ENCODE measurements at regions of chr14 and their contacts with region 1.

Region 1: DNA sequence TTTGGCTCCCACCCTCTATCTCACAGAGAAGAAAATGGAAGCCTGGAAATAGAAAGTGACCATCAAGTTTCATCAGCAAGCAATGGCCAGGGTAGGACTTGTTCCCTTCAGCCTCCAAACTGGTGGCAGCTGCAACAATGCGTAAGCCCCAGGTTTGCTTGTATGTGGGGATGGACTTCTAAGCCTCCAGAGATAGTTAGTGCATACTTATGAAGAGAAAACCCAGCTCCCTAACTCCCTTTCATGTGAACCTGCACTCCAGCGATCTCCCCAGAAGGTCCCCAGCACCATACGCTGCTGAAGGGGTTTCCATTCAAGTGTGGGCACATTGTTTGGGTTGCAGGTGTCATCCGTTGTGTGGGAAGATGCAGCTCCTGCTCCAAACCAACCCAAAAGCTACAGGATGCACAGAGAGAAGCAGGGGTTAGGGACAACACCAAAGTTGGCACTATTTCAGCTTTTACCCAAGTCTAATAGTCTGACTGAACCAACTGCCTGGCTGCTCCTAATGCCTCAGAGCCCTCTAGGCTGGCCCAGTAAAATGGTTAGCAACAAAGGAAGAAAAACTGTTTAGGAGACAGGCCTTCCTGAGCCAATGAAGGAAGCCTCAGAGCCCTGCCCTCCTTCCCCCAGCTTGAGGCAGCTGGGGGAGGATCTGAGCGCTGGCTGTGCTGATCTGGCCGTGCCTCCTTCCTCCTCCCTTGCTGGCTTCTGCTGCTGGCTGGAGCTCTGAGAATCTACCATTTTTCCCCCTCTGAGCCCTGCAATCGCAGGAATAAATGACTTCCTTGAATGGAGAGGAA is 12.3 kb downstream of the ZFP36L1 start:
- DNase-seq: peak in 4 of 5 donors; percentile 27 to 64 (median 38)
- H3K4me3 ChIP-seq: peak overlapping the region in 1 of 2 donors; percentile 49
- H3K4me3 Mint-ChIP-seq: peak overlapping the region; percentile 79 to 93 (median 85)
- H3K27ac ChIP-seq: peak overlapping the region; percentile 58
- H3K27ac Mint-ChIP-seq: peak overlapping the region; percentile 93 to 99 (median 97)
- H3K4me1 ChIP-seq: peaks cover 91% of the 10 kb centered on the region
- H3K4me1 Mint-ChIP-seq: peaks cover 60 to 98% (median 76%) of the 10 kb centered on the region in 4 donors
- H3K27me3 ChIP-seq: no peaks in the 10 kb centered on the region
- H3K27me3 Mint-ChIP-seq: no peaks in the 10 kb centered on the region

Region 2: DNA sequence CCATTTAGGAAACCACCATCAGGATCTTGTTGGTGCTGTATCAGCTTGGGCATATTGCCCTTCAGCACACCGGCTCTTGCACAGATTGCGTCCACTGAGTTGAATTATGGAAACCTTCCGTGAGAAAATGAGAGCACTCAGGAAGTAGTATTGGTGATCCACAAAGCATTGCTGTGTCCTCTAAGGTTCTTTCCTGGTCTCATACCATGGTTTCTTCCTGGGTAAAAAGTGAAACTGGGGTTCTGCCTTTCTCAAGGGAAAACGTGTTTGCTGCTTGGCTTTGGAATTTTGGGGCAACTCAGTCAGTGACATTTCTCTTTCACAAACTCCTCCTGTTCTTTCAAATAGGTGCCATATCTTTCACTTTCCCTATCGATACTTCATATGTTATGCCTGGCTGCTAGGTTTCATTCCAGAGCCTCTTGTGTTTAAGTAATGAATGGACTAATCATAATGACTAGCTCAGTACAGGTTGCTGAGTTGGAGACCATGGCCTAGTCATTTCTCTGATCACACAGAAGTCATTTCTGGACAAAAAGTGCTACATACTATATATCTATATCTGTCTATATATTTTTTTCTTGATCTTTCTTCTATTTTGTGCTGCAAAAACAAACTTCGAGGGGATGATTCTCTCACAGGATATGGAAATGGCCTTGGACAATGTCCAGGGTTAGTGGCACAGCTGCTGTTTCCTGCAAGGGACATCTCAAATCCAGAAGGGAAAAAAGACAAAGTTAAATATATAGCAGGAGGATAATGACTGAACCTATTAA is 411.1 kb before region 1 on chr14:
- CTCF ChIA-PET with region 1: no interaction called
- POLR2A ChIA-PET with region 1: interaction called, 17 read pairs
- intact Hi-C with region 1: no loop called
- DNase-seq: peak in 1 of 5 donors; percentile 7
- H3K4me3 ChIP-seq: peak overlapping the region in 1 of 2 donors; percentile 9
- H3K4me3 Mint-ChIP-seq: peak overlapping the region; percentile 43 to 83 (median 70)
- H3K27ac ChIP-seq: peak overlapping the region; percentile 45
- H3K27ac Mint-ChIP-seq: peak overlapping the region; percentile 71 to 95 (median 86)
- H3K4me1 ChIP-seq: peaks cover 40% of the 10 kb centered on the region
- H3K4me1 Mint-ChIP-seq: peaks cover 26 to 61% (median 47%) of the 10 kb centered on the region in 4 donors
- H3K27me3 ChIP-seq: no peaks in the 10 kb centered on the region
- H3K27me3 Mint-ChIP-seq: no peaks in the 10 kb centered on the region

Region 3: DNA sequence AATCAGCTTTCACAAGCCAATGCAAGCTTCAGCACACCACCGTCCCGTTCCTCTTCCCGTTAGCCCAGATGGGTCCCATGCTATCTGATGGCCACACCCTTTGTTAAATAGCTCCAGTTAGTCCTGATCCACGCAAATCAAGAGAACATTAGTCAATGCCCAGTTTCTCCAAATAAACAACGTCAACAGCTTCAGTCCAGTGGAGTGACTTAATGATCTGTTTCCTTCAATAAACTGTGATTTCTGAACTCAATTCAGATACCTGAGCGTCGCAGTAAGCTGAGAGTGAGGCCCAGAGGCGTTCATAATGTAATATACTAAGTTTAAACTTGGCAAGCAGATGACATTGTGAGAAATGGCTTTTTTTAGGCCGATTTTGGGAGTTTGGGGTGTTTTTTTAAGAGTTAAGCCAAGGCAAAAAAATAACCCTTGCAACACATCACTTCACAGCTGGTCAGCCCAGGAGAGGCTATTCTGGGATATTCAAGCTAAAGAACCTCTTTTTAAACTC is 100.0 kb before region 1 on chr14:
- CTCF ChIA-PET with region 1: interaction called, 48 read pairs
- POLR2A ChIA-PET with region 1: interaction called, 581 read pairs
- intact Hi-C with region 1: loop called (anchors 1 kb)
- DNase-seq: no peak
- H3K4me3 ChIP-seq: no peak overlapping the region
- H3K4me3 Mint-ChIP-seq: no peak overlapping the region
- H3K27ac ChIP-seq: no peak overlapping the region
- H3K27ac Mint-ChIP-seq: peak overlapping the region in 4 of 7 donors; percentile 31 to 97 (median 50)
- H3K4me1 ChIP-seq: peaks cover 50% of the 10 kb centered on the region
- H3K4me1 Mint-ChIP-seq: peaks cover 38 to 58% (median 47%) of the 10 kb centered on the region in 4 donors
- H3K27me3 ChIP-seq: no peaks in the 10 kb centered on the region
- H3K27me3 Mint-ChIP-seq: no peaks in the 10 kb centered on the region

Region 4: DNA sequence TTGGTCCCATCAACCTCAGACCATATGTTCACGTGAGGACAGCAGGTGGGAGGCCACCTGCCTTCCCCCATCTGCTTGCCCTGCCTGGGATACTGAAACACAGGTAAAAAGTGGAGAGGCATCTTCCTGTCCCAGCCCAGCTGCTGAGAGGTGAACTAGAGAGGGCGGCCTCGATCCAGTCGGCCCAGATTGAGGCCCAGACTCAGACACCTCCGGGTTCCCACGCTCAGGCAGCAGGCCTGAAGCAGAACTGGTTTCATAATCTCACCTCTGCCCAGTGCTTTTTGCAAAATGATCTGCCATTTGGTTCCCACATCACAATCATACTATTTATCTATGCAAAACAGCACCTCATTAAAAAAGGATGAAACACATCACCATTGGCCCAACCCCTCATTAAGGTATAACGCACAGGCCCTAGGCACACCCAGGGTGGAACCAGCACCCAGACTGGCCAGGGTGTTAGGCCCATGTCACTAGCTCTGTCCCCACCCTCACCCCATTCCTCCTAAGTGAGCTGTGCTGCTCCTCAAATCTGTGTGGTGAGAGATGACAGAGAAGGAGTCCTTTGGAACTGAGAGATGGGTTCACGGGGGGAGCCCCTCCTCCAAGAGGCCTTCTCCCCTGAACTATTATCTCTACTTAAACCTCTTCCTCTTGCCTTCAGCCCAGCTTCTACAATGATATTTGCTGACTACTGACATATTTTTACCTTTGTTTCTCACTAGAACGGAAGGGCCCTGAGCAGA is 68.8 kb before region 1 on chr14:
- CTCF ChIA-PET with region 1: interaction called, 6 read pairs
- POLR2A ChIA-PET with region 1: interaction called, 112 read pairs
- intact Hi-C with region 1: no loop called
- DNase-seq: peak in 4 of 5 donors; percentile 26 to 35 (median 32)
- H3K4me3 ChIP-seq: no peak overlapping the region
- H3K4me3 Mint-ChIP-seq: peak overlapping the region in 6 of 8 donors; percentile 5 to 69 (median 45)
- H3K27ac ChIP-seq: peak overlapping the region; percentile 40
- H3K27ac Mint-ChIP-seq: peak overlapping the region; percentile 75 to 92 (median 86)
- H3K4me1 ChIP-seq: peaks cover 41% of the 10 kb centered on the region
- H3K4me1 Mint-ChIP-seq: peaks cover 37 to 50% (median 45%) of the 10 kb centered on the region in 4 donors
- H3K27me3 ChIP-seq: no peaks in the 10 kb centered on the region
- H3K27me3 Mint-ChIP-seq: no peaks in the 10 kb centered on the region

Region 5: GRCh38 chr14:68734231-68734775 is 46.3 kb before region 1 on chr14:
- CTCF ChIA-PET with region 1: interaction called, 7 read pairs
- POLR2A ChIA-PET with region 1: interaction called, 66 read pairs
- intact Hi-C with region 1: loop called (anchors 5 kb)
- DNase-seq: peak; percentile 21 to 61 (median 30)
- H3K4me3 ChIP-seq: no peak overlapping the region
- H3K4me3 Mint-ChIP-seq: peak overlapping the region in 7 of 8 donors; percentile 15 to 52 (median 41)
- H3K27ac ChIP-seq: peak overlapping the region; percentile 32
- H3K27ac Mint-ChIP-seq: peak overlapping the region; percentile 9 to 93 (median 75)
- H3K4me1 ChIP-seq: peaks cover 29% of the 10 kb centered on the region
- H3K4me1 Mint-ChIP-seq: peaks cover 24 to 43% (median 34%) of the 10 kb centered on the region in 4 donors
- H3K27me3 ChIP-seq: no peaks in the 10 kb centered on the region
- H3K27me3 Mint-ChIP-seq: no peaks in the 10 kb centered on the region